Activated CD4-positive, alpha-beta memory T cell treated with anti-CD3 and anti-CD28 coated beads, Interleukin-2, amount 10 ng/mL, durations not matched to agents 7 days and 5 days (primary cell): ENCODE measurements at regions of chr9 and their contacts with region 1.

Region 1: GRCh38 chr9:110183208-110184145 is 24.5 kb downstream of the C9orf152 start:
- DNase-seq: peak; percentile 66
- H3K4me3 Mint-ChIP-seq: no peak overlapping the region
- H3K27ac Mint-ChIP-seq: no peak overlapping the region
- H3K4me1 Mint-ChIP-seq: peaks cover 10% of the 10 kb centered on the region
- H3K27me3 Mint-ChIP-seq: peaks cover 8% of the 10 kb centered on the region

Region 2: GRCh38 chr9:110217656-110218099 is 34.2 kb after region 1 on chr9:
- CTCF ChIA-PET with region 1: interaction called, 41 read pairs
- POLR2A ChIA-PET with region 1: no interaction called
- DNase-seq: no peak
- H3K4me3 Mint-ChIP-seq: no peak overlapping the region
- H3K27ac Mint-ChIP-seq: no peak overlapping the region
- H3K4me1 Mint-ChIP-seq: peaks cover 9% of the 10 kb centered on the region
- H3K27me3 Mint-ChIP-seq: peaks cover 25% of the 10 kb centered on the region

Region 3: DNA sequence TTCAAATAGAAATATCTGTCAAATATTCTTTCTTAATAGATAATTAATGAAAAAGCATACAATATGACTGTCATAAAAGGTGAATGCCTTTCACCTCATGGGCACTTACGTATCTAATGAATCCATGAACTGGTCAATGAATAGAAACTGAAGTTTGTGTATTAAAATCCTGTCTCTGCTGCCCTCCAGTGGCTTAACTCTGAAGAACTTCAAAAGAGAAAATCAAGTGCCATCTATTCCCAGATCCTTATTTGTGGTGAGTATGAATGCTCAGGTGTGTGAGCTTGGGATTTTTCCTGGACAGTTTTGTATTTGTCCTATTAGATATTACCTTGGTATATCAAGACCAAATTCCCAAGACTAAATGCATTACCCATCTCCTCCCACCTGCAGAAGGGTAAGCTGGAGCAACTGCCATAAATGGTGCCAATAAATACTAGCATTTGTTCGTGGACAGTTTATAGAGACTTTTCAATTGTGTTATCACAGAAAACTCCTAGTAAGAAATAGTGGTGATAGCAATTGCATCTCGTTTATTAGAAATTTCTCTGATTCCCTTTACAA is 440.1 kb after region 1 on chr9:
- CTCF ChIA-PET with region 1: interaction called, 12 read pairs
- POLR2A ChIA-PET with region 1: no interaction called
- DNase-seq: no peak
- H3K4me3 Mint-ChIP-seq: no peak overlapping the region
- H3K27ac Mint-ChIP-seq: no peak overlapping the region
- H3K4me1 Mint-ChIP-seq: peaks cover 5% of the 10 kb centered on the region
- H3K27me3 Mint-ChIP-seq: peaks cover 1% of the 10 kb centered on the region